Activated CD8-positive, alpha-beta T cell treated with anti-CD3 and anti-CD28 coated beads, Interleukin-2, amount 10 ng/mL, durations not matched to agents 7 days and 5 days (primary cell): ENCODE measurements at regions of chr4 and their contacts with region 1.

Region 1: DNA sequence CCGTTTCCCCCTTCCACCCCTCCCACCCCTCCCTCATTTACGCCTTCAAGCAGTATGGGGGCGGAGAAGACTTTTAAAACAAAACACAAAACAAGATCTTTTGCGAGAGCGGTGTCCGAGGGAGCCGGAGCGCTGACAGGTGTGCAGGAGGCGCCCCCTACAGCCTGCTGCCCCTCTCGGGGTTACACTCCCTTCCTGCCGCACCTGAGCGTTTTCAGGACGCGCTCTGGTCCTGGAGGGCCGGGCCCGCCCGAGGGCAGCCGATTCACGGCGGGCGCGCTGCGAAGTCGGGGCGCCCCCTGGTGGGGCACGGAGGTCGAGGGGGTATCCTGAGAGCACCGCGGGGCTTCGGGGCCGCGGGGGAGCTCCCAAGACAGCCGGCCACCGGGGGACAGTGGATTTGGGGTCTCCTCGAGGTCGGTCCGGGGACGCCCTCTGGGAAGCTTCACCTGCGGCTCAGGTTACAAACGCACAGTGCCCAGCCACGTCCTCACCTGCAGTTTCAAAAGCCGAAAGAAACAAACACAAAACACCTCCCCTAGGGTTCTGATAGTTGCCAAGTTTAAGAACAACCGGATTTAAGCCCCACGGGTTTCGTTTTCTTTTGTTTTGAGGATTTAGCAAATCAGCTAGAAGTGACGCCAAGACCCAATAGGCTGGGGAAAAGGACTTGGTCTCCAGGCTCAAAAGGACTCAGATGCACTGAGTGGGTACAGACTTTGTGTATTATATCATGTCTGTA is 8.0 kb upstream of the NEUROG2 start:
- DNase-seq: peak; percentile 84
- ATAC-seq: peak; percentile 90
- H3K4me3 Mint-ChIP-seq: peak overlapping the region; percentile 70
- H3K27ac Mint-ChIP-seq: no peak overlapping the region
- H3K4me1 Mint-ChIP-seq: peaks cover 38% of the 10 kb centered on the region
- H3K27me3 Mint-ChIP-seq: peaks cover 64% of the 10 kb centered on the region

Region 2: DNA sequence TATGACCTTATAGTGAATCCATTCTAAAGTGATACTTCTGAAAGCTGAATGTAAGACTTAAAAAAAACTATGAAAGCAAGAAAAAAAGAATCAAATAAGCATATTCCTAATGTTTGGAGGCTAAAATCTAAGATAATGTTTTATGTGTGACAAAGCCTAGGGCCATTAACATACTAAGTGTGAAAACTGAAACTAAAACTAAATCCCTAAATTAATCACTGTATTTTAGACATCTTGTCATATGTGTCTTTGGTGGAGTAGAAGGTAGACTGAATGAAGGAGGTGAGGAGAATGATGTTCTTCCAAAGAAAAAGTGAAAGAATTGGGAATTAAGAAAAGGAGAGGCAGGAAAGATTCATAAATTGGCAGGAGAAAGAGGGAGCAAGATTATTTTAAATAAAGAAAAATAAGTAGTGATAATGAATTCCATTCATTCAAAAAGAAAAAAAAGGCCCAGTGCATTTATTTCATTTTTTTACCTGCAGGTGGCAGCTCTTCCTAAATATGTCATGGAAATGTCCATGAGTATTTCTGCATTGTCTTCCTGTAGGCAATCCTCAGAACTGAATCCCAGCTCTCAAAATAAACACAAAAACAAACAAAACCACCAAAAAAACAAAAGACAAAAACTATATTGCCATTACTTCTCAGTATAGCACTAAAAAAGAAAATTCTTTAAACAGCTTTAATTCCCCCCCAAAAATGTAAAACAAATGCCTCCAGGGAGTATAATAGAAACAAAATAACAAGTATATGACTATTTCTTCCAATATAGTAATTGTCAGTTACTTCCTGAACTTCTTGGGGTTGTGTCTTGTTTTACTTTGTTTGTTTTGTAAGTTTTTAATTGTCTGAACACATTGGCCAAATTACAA is 309.3 kb before region 1 on chr4:
- CTCF ChIA-PET with region 1: interaction called, 14 read pairs
- POLR2A ChIA-PET with region 1: no interaction called
- DNase-seq: no peak
- ATAC-seq: no peak
- H3K4me3 Mint-ChIP-seq: no peak overlapping the region
- H3K27ac Mint-ChIP-seq: no peak overlapping the region
- H3K4me1 Mint-ChIP-seq: peaks cover 5% of the 10 kb centered on the region
- H3K27me3 Mint-ChIP-seq: peaks cover 4% of the 10 kb centered on the region

Region 3: GRCh38 chr4:112327965-112328733 is 195.8 kb before region 1 on chr4:
- CTCF ChIA-PET with region 1: interaction called, 54 read pairs
- POLR2A ChIA-PET with region 1: no interaction called
- DNase-seq: no peak
- ATAC-seq: peak; percentile 55
- H3K4me3 Mint-ChIP-seq: no peak overlapping the region
- H3K27ac Mint-ChIP-seq: no peak overlapping the region
- H3K4me1 Mint-ChIP-seq: no peaks in the 10 kb centered on the region
- H3K27me3 Mint-ChIP-seq: no peaks in the 10 kb centered on the region

Region 4: DNA sequence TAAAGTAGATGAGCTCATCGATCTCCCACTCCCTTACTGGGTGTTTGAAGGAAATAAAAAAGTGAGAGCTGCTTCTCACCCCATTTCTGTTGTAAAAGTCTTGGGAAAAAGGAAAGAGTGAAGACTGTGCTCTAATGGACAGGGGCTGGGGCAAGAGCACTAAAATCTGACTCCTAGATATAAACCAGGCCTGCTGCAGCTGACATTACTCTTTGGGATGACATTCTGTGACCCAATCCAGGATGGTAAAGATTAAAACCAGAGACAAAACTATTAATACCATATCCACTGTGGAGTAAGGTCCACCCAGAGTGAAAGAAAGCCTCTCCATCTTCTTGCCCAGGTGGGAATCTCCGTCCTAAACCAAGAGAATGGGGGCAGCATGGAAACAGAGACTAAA is 12.2 kb after region 1 on chr4:
- CTCF ChIA-PET with region 1: interaction called, 12 read pairs
- POLR2A ChIA-PET with region 1: no interaction called
- DNase-seq: no peak
- ATAC-seq: no peak
- H3K4me3 Mint-ChIP-seq: no peak overlapping the region
- H3K27ac Mint-ChIP-seq: no peak overlapping the region
- H3K4me1 Mint-ChIP-seq: no peaks in the 10 kb centered on the region
- H3K27me3 Mint-ChIP-seq: peaks cover 8% of the 10 kb centered on the region